Activated CD8-positive, alpha-beta T cell treated with anti-CD3 and anti-CD28 coated beads for 36 hours (primary cell): ENCODE measurements at regions of chr5 and their contacts with region 1.

Region 1: GRCh38 chr5:110751902-110752762 is 13.3 kb downstream of the SLC25A46 start:
- DNase-seq: peak; percentile 63
- ATAC-seq: peak; percentile 95
- H3K4me3 Mint-ChIP-seq: peak overlapping the region; percentile 51
- H3K27ac Mint-ChIP-seq: peak overlapping the region; percentile 94
- H3K4me1 Mint-ChIP-seq: peaks cover 50% of the 10 kb centered on the region
- H3K27me3 Mint-ChIP-seq: no peaks in the 10 kb centered on the region
- CTCF ChIP-seq: no peak

Region 2: DNA sequence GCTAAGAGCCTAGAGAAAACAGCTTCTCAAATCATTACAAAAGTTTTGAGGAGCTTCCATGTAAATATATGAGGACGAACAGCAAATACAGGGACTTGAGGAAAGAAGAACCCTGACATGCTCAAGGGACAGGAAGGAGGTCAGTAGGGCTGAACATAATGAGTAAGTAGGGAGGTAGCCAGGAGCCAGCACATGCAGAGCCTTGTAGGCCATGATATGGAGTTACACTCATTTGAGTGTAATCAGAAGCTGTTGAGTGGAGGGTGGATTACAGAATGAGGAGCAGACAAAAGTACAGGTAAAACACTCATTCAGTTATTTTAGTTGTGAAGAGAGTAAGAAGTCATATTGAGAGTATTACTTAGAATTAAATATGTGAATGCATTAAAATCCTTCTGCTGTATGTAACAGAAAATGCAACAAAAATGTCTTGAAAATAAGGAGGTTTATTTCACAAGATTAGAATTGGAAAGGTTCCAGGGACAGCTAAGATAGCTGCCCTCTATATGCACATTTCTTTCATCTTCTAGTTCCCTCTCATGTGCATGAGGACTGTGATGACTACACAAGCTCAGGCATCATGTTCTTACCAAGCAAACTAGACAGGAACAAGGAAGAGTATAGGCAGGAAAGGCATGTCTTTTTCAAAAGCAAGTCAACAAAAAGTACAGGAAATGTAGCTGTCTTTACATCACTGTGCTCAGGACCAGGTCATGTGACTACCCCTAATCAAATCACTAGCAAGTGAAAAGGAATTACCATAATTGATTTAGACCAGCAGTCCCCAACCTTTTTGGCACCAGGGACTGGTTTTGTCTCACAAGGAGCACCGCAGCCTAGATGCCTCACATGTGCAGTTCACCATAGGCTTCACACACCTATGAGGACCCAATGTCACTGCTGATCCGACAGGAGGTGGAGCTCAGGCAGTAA is 112.9 kb before region 1 on chr5:
- CTCF ChIA-PET with region 1: no interaction called
- POLR2A ChIA-PET with region 1: no interaction called
- intact Hi-C with region 1: no loop called
- DNase-seq: no peak
- ATAC-seq: no peak
- H3K4me3 Mint-ChIP-seq: no peak overlapping the region
- H3K27ac Mint-ChIP-seq: no peak overlapping the region
- H3K4me1 Mint-ChIP-seq: peaks cover 2% of the 10 kb centered on the region
- H3K27me3 Mint-ChIP-seq: peaks cover 4% of the 10 kb centered on the region
- CTCF ChIP-seq: no peak

Region 3: GRCh38 chr5:110738812-110739651 is 13.1 kb before region 1 on chr5 and contains the start of gene SLC25A46:
- CTCF ChIA-PET with region 1: interaction called, 19 read pairs
- POLR2A ChIA-PET with region 1: interaction called, 3 read pairs
- intact Hi-C with region 1: no loop called
- DNase-seq: peak; percentile 94
- ATAC-seq: peak; percentile 88
- H3K4me3 Mint-ChIP-seq: peak within 1 kb of the TSS; percentile 96
- H3K27ac Mint-ChIP-seq: peak within 1 kb of the TSS; percentile 94
- H3K4me1 Mint-ChIP-seq: peaks cover 23% of the 10 kb centered on the region
- H3K27me3 Mint-ChIP-seq: peaks cover 3% of the 10 kb centered on the region
- CTCF ChIP-seq: no peak
- total RNA-seq, gene SLC25A46: 35.2 to 38.8 TPM

Region 4: DNA sequence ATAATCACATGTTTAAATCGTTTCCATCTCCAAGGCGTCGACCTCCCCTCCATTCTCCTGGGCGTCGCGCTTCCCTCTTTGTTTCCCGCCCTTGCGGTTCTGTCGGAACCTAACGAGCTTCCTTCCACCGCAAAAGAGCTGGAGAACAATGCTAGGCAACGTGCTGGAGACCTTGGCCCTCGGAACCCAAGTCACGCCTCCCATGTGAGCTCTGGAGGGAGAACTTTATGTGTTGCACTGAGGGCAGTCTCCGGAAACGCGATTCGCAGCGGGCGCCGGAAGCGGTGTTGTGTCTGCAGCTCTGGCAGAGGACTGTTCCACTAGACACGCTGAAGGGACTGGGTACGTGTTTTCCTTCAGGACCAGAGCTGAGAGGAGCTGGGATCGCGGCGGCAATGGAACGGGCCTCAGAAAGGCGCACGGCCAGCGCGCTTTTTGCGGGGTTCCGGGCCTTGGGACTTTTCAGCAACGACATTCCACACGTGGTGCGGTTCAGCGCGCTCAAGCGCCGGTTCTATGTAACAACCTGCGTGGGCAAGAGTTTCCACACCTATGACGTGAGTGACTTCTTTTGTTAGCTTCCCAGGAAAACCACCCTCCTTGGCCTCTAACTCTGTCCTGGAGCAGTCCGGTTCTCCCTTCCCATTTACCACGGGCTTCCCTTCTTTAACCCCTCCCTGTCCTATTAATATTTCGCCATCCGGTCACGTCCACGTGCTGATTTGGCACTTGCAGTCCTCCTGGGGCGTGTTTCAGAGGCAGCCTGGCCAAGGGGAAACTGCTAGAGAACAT is 340.1 kb after region 1 on chr5 and contains the start of gene WDR36:
- CTCF ChIA-PET with region 1: no interaction called
- POLR2A ChIA-PET with region 1: no interaction called
- intact Hi-C with region 1: loop called (anchors 5 kb)
- DNase-seq: peak; percentile 90
- ATAC-seq: peak; percentile 96
- H3K4me3 Mint-ChIP-seq: peak within 1 kb of the TSS; percentile 94
- H3K27ac Mint-ChIP-seq: peak within 1 kb of the TSS; percentile 96
- H3K4me1 Mint-ChIP-seq: peaks cover 37% of the 10 kb centered on the region
- H3K27me3 Mint-ChIP-seq: no peaks in the 10 kb centered on the region
- CTCF ChIP-seq: no peak
- total RNA-seq, gene WDR36: 65.1 to 65.6 TPM